ENCODE measurements at regions of chr14 and their contacts with region 1.

Region 1: DNA sequence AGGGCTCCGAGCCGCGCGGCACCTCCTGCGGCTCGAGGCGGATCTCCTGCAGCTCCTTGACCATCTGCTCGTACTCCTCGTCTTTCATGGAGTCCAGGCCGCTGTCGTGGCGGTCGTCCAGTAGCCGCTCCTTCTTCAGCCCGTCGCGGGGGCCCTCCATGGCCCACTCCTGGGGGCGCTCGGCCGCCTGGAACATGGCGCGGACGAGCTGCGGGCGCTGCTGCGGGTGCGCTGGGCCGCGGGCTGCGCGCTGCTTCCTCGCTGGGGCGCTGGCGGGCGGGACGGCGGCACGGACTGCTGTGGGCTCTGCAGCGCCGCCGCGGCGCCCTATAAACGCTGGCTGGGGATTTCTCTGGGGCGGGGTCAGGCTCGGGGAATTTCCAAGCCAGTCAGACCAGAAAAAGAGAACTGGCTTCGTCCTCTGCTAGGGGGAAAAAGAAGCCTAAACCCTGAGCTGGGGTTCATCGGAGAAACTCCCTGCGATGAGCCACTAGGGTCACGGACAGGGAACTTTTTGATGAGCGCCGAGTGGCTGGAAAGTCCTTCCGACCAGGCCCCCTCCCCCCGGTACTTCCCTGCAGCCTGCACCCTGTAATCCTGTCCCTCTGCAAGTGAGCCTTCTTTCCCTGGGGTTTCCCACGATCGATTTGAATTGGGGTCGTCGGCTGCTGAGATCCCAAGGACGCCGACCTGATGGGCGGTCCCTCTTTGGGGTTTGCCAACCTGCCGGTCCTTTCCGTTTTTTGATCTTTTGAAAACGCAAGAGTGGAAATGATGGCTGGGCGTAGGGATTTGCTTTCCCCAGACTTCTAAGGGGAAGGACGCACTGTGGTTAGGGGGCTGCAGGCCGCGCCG is at the start of gene NFKBIA:
- DNase-seq: peak; percentile 98
- ATAC-seq: peak; percentile 69
- H3K4me3 Mint-ChIP-seq: peak within 1 kb of the TSS; percentile 96
- H3K27ac Mint-ChIP-seq: peak within 1 kb of the TSS; percentile 96
- H3K4me1 Mint-ChIP-seq: peaks cover 54% of the 10 kb centered on the region
- H3K27me3 Mint-ChIP-seq: no peaks in the 10 kb centered on the region
- CTCF ChIP-seq: no peak
- total RNA-seq, gene NFKBIA: 480 and 515 TPM in 2 replicates

Region 2: DNA sequence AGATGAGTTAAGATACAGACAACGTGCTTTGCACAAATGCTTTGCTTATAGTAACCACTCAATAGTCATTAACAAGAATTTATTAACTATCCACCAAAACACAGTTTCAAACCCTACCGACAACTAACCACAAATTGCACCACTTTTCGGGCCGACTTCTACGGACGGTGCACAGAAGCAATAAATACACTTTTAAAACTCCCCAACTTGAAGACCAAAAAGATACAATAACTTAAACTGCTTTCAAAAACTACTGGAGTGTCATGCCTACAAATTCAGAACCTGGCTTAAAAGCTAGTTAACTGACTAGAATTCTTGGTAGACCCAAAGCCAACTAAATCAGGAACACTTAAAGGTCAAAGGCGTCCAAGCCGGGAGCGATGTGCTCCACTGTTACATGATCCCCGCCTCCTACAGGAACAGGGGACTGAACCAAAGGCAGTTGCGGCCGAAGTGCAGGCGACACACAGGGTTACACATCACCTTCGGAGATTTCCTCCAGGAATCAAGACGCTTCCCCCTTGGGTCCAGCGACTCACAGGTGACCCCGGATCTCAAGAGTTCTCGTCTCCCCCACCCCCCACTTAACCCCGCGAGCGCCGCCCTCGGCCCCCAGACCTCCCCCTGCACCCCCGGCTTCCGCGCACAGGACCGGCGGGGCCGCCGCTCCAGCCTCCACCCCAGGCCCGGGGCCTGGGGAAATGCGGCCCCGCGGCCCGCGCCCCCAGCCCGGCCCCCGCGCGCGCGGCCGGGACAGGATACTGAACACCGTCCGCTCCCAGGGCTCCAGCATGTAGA is 943.1 kb before region 1 on chr14:
- CTCF ChIA-PET with region 1: no interaction called
- POLR2A ChIA-PET with region 1: no interaction called
- intact Hi-C with region 1: loop called (anchors 2 kb)
- DNase-seq: no peak
- ATAC-seq: no peak
- H3K4me3 Mint-ChIP-seq: peak overlapping the region; percentile 88
- H3K27ac Mint-ChIP-seq: peak overlapping the region; percentile 76
- H3K4me1 Mint-ChIP-seq: peaks cover 15% of the 10 kb centered on the region
- H3K27me3 Mint-ChIP-seq: no peaks in the 10 kb centered on the region
- CTCF ChIP-seq: no peak

Region 3: DNA sequence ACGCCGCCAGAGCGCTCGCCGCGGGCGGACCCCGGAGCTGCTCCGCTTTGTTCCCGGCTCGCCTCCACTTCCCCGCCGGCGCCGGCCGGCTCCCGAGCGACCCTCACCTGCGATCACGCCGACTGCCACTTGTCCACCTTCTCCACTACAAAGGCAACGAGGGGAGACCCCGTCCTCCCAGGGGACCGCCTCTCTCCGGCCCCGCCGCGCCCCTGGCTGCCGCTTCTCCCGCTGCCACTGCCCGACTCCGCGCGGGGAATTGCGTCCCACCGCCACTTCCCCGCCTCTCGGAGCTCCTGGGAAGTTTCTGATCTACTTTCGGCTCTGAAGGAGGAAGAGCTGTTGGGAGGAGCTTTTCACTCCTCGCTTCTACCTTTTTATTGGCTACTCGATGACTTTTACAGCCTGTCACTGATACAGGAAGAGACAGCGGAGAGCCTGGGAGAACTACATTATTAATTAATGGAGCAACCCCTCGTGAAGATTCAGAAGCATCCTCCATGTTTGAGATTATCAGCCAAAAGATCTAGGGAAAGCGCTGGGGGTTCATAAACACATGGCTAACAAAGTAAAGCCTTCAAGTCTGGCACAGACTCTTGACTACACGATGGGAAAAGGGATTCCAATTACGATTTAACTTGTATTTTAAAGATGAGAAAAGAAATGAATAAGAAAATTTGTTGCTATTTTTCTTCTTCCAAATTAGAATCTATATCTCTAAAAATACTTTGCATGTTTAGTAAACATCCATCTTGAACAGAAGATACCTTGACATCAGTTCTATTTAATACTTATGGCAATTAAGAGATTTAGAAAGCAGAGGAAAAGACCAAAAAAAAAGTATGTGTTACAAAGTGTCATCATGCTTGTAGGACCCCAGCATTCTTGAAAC is 529.4 kb before region 1 on chr14 and contains the start of gene BAZ1A:
- CTCF ChIA-PET with region 1: no interaction called
- POLR2A ChIA-PET with region 1: interaction called, 30 read pairs
- intact Hi-C with region 1: loop called (anchors 1 kb)
- DNase-seq: peak; percentile 63
- ATAC-seq: peak; percentile 12
- H3K4me3 Mint-ChIP-seq: peak within 1 kb of the TSS; percentile 100
- H3K27ac Mint-ChIP-seq: peak within 1 kb of the TSS; percentile 99
- H3K4me1 Mint-ChIP-seq: peaks cover 35% of the 10 kb centered on the region
- H3K27me3 Mint-ChIP-seq: no peaks in the 10 kb centered on the region
- CTCF ChIP-seq: no peak
- total RNA-seq, gene BAZ1A: 45.3 and 55.9 TPM in 2 replicates

Region 4: DNA sequence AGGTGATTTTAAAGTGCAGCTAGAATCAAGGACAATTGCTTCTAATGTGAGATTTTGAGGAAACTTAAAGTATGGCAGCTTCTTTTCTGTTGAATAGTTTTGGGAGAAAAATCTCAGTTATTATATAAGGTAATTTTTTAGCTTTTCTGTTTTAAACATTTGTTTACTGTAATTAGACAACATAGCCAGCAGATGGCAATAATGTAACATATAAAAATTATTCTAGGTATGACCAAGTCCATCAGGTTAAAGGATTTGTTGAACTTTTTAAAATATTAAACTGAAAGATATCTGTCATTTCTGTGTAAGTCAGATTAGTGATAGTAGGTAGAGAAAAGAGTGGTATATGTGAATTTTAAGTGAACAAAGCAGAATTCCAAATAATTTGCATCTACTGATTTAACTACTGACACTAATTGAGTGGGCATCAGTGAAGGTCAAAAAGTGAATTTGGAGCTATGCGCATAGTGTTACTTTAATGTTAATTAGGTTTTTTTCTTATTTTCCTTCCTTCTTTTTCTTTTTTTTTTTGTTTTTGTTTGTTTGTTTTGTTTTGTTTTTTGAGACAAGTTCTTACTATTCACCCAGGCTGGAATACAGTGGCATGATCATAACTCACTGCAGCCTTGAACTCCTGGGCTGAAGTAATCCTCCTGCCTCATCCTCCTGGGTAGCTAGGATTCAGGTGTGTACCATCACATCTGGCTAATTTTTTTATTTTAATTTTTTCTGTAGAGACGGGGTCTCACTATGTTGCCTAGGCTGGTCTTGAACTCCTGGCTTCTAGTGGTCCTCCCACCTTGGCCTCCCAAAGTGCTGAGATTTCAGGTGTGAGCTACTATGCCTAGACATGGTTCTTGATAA is 263.7 kb before region 1 on chr14:
- CTCF ChIA-PET with region 1: interaction called, 263 read pairs
- POLR2A ChIA-PET with region 1: interaction called, 9 read pairs
- intact Hi-C with region 1: no loop called
- DNase-seq: no peak
- ATAC-seq: no peak
- H3K4me3 Mint-ChIP-seq: no peak overlapping the region
- H3K27ac Mint-ChIP-seq: no peak overlapping the region
- H3K4me1 Mint-ChIP-seq: peaks cover 2% of the 10 kb centered on the region
- H3K27me3 Mint-ChIP-seq: no peaks in the 10 kb centered on the region
- CTCF ChIP-seq: peak; percentile 58

Region 5: DNA sequence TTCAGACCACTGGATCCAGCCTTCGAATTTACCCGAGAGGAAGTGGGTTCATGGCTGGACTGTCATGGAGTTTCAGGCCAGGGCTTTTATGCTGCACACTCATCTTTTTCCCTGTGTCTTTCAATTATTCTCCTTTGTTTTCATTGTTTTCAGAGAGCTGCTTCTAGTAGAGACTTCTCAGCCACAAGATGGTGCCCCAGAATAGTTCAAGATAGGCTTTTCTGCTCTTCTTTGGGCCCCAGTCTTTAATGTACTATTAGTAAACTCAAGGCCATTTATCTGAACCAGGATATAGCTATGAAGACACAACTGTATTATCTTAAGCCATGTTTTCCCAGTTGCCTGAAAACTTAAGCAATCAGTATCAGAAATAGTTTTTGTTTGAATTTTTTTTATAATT is 142.9 kb before region 1 on chr14:
- CTCF ChIA-PET with region 1: interaction called, 22 read pairs
- POLR2A ChIA-PET with region 1: interaction called, 10 read pairs
- intact Hi-C with region 1: loop called (anchors 1 kb)
- DNase-seq: no peak
- ATAC-seq: no peak
- H3K4me3 Mint-ChIP-seq: no peak overlapping the region
- H3K27ac Mint-ChIP-seq: no peak overlapping the region
- H3K4me1 Mint-ChIP-seq: no peaks in the 10 kb centered on the region
- H3K27me3 Mint-ChIP-seq: no peaks in the 10 kb centered on the region
- CTCF ChIP-seq: no peak

Region 6: GRCh38 chr14:35331605-35332516 is 72.8 kb before region 1 on chr14:
- CTCF ChIA-PET with region 1: no interaction called
- POLR2A ChIA-PET with region 1: interaction called, 53 read pairs
- intact Hi-C with region 1: loop called (anchors 1 kb)
- DNase-seq: no peak
- ATAC-seq: peak; percentile 66
- H3K4me3 Mint-ChIP-seq: peak overlapping the region; percentile 52
- H3K27ac Mint-ChIP-seq: peak overlapping the region; percentile 51
- H3K4me1 Mint-ChIP-seq: peaks cover 25% of the 10 kb centered on the region
- H3K27me3 Mint-ChIP-seq: no peaks in the 10 kb centered on the region
- CTCF ChIP-seq: no peak

Region 7: DNA sequence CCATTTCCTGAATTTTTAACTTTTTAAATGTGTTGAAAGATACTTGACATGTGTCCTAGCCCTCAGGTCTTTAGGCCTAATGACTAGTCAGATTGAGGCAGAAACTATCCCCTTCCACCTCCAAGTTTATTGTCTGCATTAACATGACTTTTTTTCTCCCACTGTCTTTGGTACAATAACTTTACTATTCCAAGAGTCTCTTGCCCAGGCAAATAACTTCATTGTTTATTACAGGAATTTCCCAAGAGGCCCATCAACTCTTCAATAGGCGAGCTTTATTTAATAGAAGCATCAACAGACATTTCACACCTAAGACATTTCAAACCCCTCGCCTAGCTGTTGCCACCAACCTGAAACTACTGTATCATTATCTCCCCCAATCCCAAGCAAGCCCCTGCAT is 10.8 kb before region 1 on chr14:
- CTCF ChIA-PET with region 1: interaction called, 3 read pairs
- POLR2A ChIA-PET with region 1: interaction called, 21 read pairs
- intact Hi-C with region 1: no loop called
- DNase-seq: no peak
- ATAC-seq: no peak
- H3K4me3 Mint-ChIP-seq: no peak overlapping the region
- H3K27ac Mint-ChIP-seq: no peak overlapping the region
- H3K4me1 Mint-ChIP-seq: peaks cover 21% of the 10 kb centered on the region
- H3K27me3 Mint-ChIP-seq: no peaks in the 10 kb centered on the region
- CTCF ChIP-seq: no peak

Region 8: GRCh38 chr14:35643513-35643912 is 238.8 kb after region 1 on chr14:
- CTCF ChIA-PET with region 1: no interaction called
- POLR2A ChIA-PET with region 1: no interaction called
- intact Hi-C with region 1: no loop called
- DNase-seq: no peak
- ATAC-seq: no peak
- H3K4me3 Mint-ChIP-seq: no peak overlapping the region
- H3K27ac Mint-ChIP-seq: no peak overlapping the region
- H3K4me1 Mint-ChIP-seq: peaks cover 3% of the 10 kb centered on the region
- H3K27me3 Mint-ChIP-seq: no peaks in the 10 kb centered on the region
- CTCF ChIP-seq: no peak